ENCODE measurements at regions of chr20 and their contacts with region 1.

Region 1: GRCh38 chr20:32357869-32358631 is at the start of gene ASXL1:
- DNase-seq: peak; percentile 95 to 99 (median 98)

Region 2: GRCh38 chr20:32285621-32286371 is 72.3 kb before region 1 on chr20:
- intact Hi-C with region 1: loop called (anchors 10 kb)
- DNase-seq: peak in 1 of 42 donors; percentile 5

Region 3: DNA sequence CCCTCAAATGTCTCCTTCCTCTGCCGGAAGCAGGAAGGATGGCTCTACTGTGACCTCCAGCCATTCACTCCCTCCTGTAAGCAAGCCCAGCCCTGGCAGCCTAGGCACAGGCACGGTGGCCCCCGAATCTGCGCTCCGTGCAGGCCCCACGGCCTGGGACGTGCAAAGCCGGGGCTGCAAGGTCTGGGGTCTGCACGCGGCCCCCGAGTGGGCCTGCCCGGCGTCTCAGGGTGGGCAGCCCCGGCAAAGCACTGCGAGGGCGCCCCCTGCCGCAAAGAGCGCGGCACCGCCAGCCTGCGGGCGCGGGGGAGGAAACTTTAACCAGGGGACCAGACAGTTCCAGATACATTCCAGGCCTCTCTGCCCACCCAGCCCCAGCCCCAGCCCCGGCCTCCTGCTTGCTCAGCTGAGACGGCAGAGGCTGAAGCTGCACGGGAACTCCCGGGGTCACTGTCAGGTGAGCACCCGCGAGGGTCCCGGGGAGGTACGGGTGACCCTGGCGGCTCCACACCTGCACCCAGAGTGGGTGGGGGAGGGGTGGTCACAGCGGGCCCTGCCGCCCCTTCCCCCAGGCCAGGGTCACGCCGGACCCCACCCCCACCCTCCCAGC is 98.9 kb after region 1 on chr20:
- intact Hi-C with region 1: loop called (anchors 10 kb)
- DNase-seq: peak in 34 of 42 donors; percentile 39 to 85 (median 68)

Region 4: DNA sequence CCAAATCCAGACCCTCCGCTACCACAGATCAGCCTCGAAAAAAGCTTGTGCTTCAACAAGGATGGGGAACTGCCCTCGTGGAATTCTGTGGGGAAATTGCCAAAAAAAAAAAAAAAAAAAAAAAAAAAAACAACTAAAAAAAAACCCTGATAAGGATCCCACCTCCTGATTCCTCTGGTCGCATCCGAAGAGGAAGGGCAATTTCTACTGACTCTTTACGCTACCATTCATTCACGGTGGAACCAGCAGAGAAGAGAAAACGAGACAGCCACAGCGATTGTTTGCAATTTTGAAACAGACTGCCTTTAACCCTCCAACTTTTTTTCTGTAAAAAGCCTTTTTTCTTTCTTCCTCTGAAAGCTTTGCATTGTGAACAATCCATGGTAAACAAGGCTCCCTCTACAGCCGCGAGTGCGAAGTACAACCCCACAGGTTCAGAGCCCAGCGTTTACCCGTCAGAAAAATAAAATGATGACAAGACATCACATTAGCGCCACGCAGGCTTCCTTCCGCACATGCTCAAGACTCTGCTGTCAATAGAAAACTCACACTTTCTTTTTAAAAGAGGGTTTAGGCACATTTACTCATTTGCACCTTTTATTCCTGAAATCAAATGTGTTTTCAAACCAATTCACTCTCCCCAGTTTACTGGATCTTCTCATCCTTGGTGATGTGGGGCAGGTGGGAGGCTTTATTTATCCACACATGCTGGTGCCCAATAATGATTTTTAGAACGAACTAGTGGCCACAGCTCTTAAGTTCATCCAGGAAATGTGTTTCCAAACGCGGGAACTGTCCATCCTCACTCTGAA is 127.1 kb after region 1 on chr20:
- intact Hi-C with region 1: loop called (anchors 5 kb)
- DNase-seq: peak; percentile 73 to 96 (median 88)